ENCODE measurements at regions of chr4 and their contacts with region 1.

Region 1: DNA sequence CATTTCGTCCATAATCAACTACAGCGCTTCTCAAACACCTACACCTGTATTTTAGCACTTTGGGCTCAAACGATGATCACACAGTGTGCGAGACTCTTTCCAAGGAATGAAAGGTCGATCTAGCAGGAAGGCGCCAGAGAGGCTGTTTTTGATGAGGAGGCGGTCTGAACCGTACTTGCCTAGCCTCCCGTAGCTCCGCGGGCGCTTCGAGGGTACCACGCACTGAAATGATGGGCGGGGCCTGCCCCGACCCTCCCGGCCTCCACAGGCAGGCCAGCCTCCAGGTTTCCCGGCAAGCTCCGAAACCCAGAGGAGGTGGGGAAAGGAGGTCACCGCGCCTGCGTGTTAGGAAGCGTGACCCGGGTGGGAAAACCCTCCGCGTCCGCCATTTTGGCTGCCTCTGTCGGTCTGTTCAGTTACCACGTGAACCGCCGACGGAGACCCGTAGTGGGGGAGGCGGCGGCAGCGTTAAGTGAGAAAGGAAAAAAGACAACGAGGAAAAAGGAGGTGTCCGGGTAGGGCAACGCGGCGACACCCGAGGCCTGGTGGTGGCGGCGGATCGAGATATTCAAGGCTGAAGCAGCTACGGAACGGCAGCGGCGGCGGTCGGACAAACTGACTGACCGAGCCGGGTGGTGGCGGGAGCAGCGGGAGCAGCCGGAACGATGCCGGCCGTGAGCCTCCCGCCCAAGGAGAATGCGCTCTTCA is at the start of gene NAA15:
- DNase-seq: peak; percentile 99
- ATAC-seq: peak; percentile 89
- H3K4me3 Mint-ChIP-seq: peak within 1 kb of the TSS; percentile 98
- H3K27ac Mint-ChIP-seq: peak within 1 kb of the TSS; percentile 96
- H3K4me1 Mint-ChIP-seq: peaks cover 61% of the 10 kb centered on the region
- H3K27me3 Mint-ChIP-seq: no peaks in the 10 kb centered on the region
- total RNA-seq, gene NAA15: 64.3 to 113 TPM

Region 2: GRCh38 chr4:139015269-139015947 is 285.9 kb before region 1 on chr4 and contains the start of gene NOCT:
- CTCF ChIA-PET with region 1: interaction called, 3 read pairs
- POLR2A ChIA-PET with region 1: interaction called, 4 read pairs
- intact Hi-C with region 1: loop called (anchors 1 kb)
- DNase-seq: peak; percentile 98
- ATAC-seq: peak; percentile 92
- H3K4me3 Mint-ChIP-seq: peak within 1 kb of the TSS; percentile 90
- H3K27ac Mint-ChIP-seq: peak within 1 kb of the TSS; percentile 96
- H3K4me1 Mint-ChIP-seq: peaks cover 41% of the 10 kb centered on the region
- H3K27me3 Mint-ChIP-seq: no peaks in the 10 kb centered on the region
- total RNA-seq, gene NOCT: 16.5 to 20.5 TPM

Region 3: DNA sequence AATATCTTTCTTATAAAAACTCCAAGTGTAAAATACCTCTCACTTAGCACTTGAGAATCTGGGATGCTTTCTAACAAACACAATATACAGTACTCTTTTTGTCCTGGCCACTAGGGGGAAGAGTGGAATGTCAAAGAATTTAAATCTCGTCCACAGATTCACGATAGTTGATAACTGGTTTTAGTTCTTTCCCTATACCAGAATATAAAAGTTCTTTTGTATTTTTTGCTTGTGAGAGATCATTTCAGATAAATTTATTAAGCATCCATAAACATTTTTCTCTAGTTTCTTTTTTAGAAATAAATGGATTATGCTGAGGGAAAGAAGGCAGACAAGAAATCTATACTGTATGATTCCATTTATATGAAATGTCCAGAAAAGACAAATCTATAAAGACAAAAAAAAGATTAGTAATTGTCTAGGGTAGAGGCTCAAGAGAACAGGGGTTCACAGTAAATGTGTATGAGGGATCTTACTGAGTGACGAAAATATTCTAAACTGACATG is 71.7 kb before region 1 on chr4:
- CTCF ChIA-PET with region 1: interaction called, 28 read pairs
- POLR2A ChIA-PET with region 1: no interaction called
- intact Hi-C with region 1: no loop called
- DNase-seq: no peak
- ATAC-seq: peak; percentile 66
- H3K4me3 Mint-ChIP-seq: no peak overlapping the region
- H3K27ac Mint-ChIP-seq: no peak overlapping the region
- H3K4me1 Mint-ChIP-seq: peaks cover 1% of the 10 kb centered on the region
- H3K27me3 Mint-ChIP-seq: no peaks in the 10 kb centered on the region

Region 4: GRCh38 chr4:139337612-139338011 is 36.3 kb after region 1 on chr4:
- CTCF ChIA-PET with region 1: interaction called, 3 read pairs
- POLR2A ChIA-PET with region 1: interaction called, 3 read pairs
- intact Hi-C with region 1: loop called in 1 of 2 experiments (anchors 5 kb)
- DNase-seq: no peak
- ATAC-seq: no peak
- H3K4me3 Mint-ChIP-seq: no peak overlapping the region
- H3K27ac Mint-ChIP-seq: no peak overlapping the region
- H3K4me1 Mint-ChIP-seq: peaks cover 17% of the 10 kb centered on the region
- H3K27me3 Mint-ChIP-seq: no peaks in the 10 kb centered on the region

Region 5: DNA sequence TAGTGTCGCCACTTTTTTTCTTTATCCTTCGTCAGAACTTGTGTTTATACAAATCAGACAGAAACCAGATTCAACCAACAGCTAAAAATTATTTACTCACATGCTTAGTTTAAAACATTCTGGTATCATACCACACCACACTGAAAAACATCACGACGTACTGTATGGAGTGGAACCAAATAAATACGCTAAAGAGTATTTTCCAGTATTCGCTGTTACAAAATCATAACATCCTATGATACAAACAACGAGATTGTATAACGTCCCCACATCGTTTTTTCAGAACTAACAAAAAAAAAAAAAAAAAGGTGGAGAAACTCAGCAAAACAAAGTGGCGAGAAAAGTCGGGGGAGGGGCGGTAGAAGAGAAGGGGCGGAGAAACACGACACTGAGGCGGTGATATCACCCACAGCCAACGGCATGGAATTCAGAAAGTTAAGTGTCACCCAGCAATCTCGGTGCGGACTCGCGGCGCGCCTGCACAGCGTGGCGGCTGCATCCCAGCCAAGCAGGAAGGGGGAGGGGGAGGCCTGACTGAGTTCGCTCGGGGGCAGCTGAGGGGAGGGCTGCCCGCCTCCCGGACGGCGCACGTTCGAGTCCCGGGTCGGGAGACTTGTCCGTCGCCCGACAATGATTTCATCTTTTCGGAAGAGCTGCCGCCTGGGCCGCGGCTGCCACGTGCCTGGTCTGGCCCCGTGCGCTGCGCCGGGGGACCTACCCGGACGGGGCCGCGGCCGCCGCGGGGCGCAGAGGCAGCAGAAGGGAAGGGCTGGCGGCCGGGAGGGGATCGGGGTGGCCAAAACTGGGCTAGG is 253.8 kb after region 1 on chr4:
- CTCF ChIA-PET with region 1: no interaction called
- POLR2A ChIA-PET with region 1: interaction called, 9 read pairs
- intact Hi-C with region 1: loop called in 1 of 2 experiments (anchors 1 kb)
- DNase-seq: peak; percentile 91
- ATAC-seq: peak; percentile 76
- H3K4me3 Mint-ChIP-seq: peak overlapping the region; percentile 96
- H3K27ac Mint-ChIP-seq: peak overlapping the region; percentile 91
- H3K4me1 Mint-ChIP-seq: peaks cover 45% of the 10 kb centered on the region
- H3K27me3 Mint-ChIP-seq: no peaks in the 10 kb centered on the region

Region 6: GRCh38 chr4:140686796-140687195 is 1385.5 kb after region 1 on chr4:
- CTCF ChIA-PET with region 1: no interaction called
- POLR2A ChIA-PET with region 1: no interaction called
- intact Hi-C with region 1: no loop called
- DNase-seq: no peak
- ATAC-seq: no peak
- H3K4me3 Mint-ChIP-seq: no peak overlapping the region
- H3K27ac Mint-ChIP-seq: no peak overlapping the region
- H3K4me1 Mint-ChIP-seq: no peaks in the 10 kb centered on the region
- H3K27me3 Mint-ChIP-seq: peaks cover 7% of the 10 kb centered on the region

Measured in activated CD4-positive, alpha-beta T cell treated with anti-CD3 and anti-CD28 coated beads for 36 hours (primary cell).